Breast epithelium (tissue), 4 donors: ENCODE measurements at regions of chr3 and their contacts with region 1.

Region 1: DNA sequence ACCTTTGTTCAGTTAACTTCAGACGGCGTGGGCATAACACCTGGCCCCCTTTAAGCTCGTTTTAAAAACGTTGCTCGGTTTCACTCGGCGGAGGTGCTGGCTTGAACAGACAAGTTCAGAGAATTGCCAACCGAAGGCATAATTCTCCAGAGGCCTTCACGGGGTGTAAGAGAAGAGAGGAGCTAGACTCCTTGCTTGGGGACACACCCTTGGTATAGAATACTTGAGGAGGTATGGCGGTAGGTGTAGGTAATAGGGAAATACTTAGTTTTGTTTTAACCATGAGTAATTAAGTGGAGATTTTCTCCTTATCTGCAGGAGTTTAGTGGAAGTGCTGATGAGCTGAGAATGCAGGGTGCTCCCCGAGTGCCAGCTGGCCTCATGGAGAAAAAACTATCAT is 921 bp downstream of the FBXL2 start:
- DNase-seq: no peak
- H3K4me3 ChIP-seq: peak overlapping the region; percentile 85 to 98 (median 94)
- H3K27ac ChIP-seq: no peak overlapping the region
- H3K4me1 ChIP-seq: no peaks in the 10 kb centered on the region
- H3K27me3 ChIP-seq: no peaks in the 10 kb centered on the region
- CTCF ChIP-seq: no peak
- POLR2A ChIP-seq: no peak

Region 2: GRCh38 chr3:33218446-33219174 is 59.6 kb before region 1 on chr3 and contains the start of gene SUSD5:
- intact Hi-C with region 1: no loop called
- DNase-seq: no peak
- H3K4me3 ChIP-seq: peak within 1 kb of the TSS; percentile 47 to 67 (median 48)
- H3K27ac ChIP-seq: no peak within 1 kb of the TSS
- H3K4me1 ChIP-seq: no peaks in the 10 kb centered on the region
- H3K27me3 ChIP-seq: peaks cover 0 to 24% of the 10 kb centered on the region in 2 donors
- CTCF ChIP-seq: no peak
- POLR2A ChIP-seq: no peak
- total RNA-seq, gene SUSD5: 0.66 to 4.2 (median 3.8) TPM

Region 3: DNA sequence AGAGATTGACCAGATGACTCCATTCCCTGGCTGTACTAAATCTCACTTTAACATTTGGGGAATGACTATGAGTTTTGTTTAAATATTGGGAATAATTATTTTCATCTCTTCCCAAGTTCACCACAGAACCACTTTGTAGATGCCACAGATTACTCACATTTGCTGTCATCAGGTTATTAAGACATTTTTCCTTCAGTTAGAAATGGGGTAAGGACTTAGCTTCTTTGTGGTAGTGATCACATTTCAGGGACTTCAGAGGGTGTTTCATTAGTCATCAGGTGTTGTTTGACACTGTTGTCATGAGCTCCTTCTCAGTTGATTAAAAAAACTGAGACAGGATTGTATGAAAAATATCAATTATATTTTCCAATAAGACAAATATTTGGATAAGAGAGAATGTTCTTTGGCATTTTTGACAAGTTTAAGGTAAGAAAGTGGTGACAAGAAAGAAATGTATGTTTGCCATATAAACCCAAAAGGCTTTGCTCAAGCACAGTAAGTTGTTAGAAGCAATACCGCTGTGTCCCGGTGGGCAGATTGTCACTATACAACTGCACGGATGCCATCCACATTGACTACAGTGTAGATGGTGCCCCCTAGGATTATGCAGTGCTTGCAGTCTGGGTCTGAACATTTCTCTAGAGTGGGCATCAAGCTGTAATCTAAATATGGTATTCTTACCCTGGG is 21.4 kb after region 1 on chr3:
- intact Hi-C with region 1: loop called (anchors 2 kb)
- DNase-seq: no peak
- H3K4me3 ChIP-seq: no peak overlapping the region
- H3K27ac ChIP-seq: no peak overlapping the region
- H3K4me1 ChIP-seq: no peaks in the 10 kb centered on the region
- H3K27me3 ChIP-seq: no peaks in the 10 kb centered on the region
- CTCF ChIP-seq: no peak
- POLR2A ChIP-seq: no peak

Region 4: DNA sequence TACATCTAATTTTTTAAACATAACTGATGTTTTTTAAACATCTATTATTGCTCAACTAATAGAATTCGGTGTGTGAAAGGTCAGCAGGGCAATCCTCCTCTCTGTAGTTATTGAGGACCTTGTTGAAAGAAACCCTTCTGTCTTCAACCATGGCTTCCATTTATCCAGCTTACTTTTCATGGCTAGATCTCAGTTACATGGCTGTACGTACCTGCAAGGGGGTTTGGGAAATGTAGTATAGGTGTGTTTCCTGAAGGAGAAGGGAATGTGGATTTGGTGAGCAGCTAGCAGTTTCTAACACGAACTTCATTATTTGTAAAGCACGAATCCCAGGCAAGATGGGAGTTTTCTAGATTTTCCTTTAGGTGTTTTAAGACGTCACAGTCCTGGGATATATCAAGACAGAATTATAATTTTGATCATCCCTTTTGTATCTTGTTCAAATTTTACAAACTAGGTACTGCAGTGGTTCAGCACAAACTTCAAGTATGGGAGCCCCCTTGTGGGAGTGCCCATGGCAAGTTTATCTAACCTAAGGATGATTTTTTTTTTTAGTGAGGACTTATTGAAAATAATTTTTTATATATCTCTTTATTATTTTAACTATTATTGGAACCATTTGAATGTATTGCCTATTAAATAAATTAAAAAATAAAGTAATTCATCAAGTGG is 40.7 kb after region 1 on chr3:
- intact Hi-C with region 1: no loop called
- DNase-seq: no peak
- H3K4me3 ChIP-seq: no peak overlapping the region
- H3K27ac ChIP-seq: no peak overlapping the region
- H3K4me1 ChIP-seq: no peaks in the 10 kb centered on the region
- H3K27me3 ChIP-seq: no peaks in the 10 kb centered on the region
- CTCF ChIP-seq: no peak
- POLR2A ChIP-seq: no peak